Activated CD8-positive, alpha-beta memory T cell treated with anti-CD3 and anti-CD28 coated beads, Interleukin-2, amount 10 ng/mL, durations not matched to agents 7 days and 5 days (primary cell): ENCODE measurements at regions of chr5 and their contacts with region 1.

Region 1: GRCh38 chr5:69334793-69335268 is 2.2 kb upstream of the CCDC125 start:
- DNase-seq: peak; percentile 87
- ATAC-seq: peak; percentile 72
- H3K4me3 Mint-ChIP-seq: no peak overlapping the region
- H3K27ac Mint-ChIP-seq: no peak overlapping the region
- H3K4me1 Mint-ChIP-seq: peaks cover 18% of the 10 kb centered on the region
- H3K27me3 Mint-ChIP-seq: no peaks in the 10 kb centered on the region

Region 2: GRCh38 chr5:69042915-69043658 is 291.7 kb before region 1 on chr5:
- CTCF ChIA-PET with region 1: interaction called, 14 read pairs
- DNase-seq: peak; percentile 87
- ATAC-seq: peak; percentile 97
- H3K4me3 Mint-ChIP-seq: peak overlapping the region; percentile 78
- H3K27ac Mint-ChIP-seq: peak overlapping the region; percentile 89
- H3K4me1 Mint-ChIP-seq: peaks cover 17% of the 10 kb centered on the region
- H3K27me3 Mint-ChIP-seq: no peaks in the 10 kb centered on the region

Region 3: GRCh38 chr5:69285448-69286116 is 49.2 kb before region 1 on chr5:
- CTCF ChIA-PET with region 1: no interaction called
- DNase-seq: no peak
- ATAC-seq: no peak
- H3K4me3 Mint-ChIP-seq: no peak overlapping the region
- H3K27ac Mint-ChIP-seq: no peak overlapping the region
- H3K4me1 Mint-ChIP-seq: no peaks in the 10 kb centered on the region
- H3K27me3 Mint-ChIP-seq: no peaks in the 10 kb centered on the region

Region 4: DNA sequence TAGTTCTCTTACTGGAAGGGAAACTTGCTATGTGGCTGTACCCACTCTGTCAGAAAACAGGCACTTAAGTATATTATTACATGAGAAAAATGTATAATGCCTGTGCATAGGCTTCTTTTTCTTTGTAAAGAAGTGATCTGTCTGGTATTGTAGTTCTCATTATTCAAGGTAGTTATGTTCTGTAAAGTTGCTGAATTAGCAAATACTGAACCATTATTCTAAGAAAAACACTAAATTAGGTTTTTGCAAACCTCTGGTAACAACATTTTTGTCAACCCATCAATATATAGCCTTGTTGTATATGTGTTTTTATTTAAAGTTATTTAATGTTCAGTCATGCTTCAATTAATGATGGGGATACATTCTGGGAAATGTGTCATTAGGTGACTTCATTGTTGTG is 43.5 kb after region 1 on chr5:
- CTCF ChIA-PET with region 1: no interaction called
- DNase-seq: no peak
- ATAC-seq: no peak
- H3K4me3 Mint-ChIP-seq: no peak overlapping the region
- H3K27ac Mint-ChIP-seq: no peak overlapping the region
- H3K4me1 Mint-ChIP-seq: peaks cover 9% of the 10 kb centered on the region
- H3K27me3 Mint-ChIP-seq: no peaks in the 10 kb centered on the region